Activated B cell treated with CpG ODN at 0.5 μM for 24 hours (primary cell): ENCODE measurements at regions of chr13 and their contacts with region 1.

Region 1: GRCh38 chr13:104491916-104492315 is 1425.7 kb upstream of the SLC10A2 start:
- DNase-seq: no peak
- ATAC-seq: no peak
- H3K4me3 Mint-ChIP-seq: no peak overlapping the region
- H3K27ac Mint-ChIP-seq: no peak overlapping the region
- H3K4me1 Mint-ChIP-seq: no peaks in the 10 kb centered on the region
- H3K27me3 Mint-ChIP-seq: no peaks in the 10 kb centered on the region
- CTCF ChIP-seq: no peak

Region 2: DNA sequence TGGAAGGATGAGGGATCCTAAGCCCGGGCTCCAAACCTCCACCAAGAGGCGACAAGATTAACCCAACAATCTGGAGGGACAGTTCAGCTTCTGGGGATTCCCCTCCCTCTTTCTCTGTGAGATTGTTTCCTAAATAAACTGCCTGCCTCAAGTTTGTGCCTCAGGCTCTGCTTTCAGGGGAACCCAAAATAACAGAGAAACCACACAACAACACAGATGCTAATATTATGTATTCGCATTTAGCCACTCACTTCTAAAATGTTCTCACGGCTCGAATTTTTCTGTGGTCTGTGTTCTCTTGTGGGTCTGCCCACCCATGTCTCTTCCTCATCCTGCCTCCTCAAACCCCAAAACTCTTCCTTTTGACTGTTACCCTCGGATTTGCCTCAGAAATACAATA is 44.6 kb before region 1 on chr13:
- CTCF ChIA-PET with region 1: no interaction called
- POLR2A ChIA-PET with region 1: no interaction called
- intact Hi-C with region 1: loop called (anchors 1 kb)
- DNase-seq: no peak
- ATAC-seq: no peak
- H3K4me3 Mint-ChIP-seq: no peak overlapping the region
- H3K27ac Mint-ChIP-seq: no peak overlapping the region
- H3K4me1 Mint-ChIP-seq: no peaks in the 10 kb centered on the region
- H3K27me3 Mint-ChIP-seq: no peaks in the 10 kb centered on the region
- CTCF ChIP-seq: no peak